Common myeloid progenitor, CD34-positive (primary cell): ENCODE measurements at regions of chr18 and their contacts with region 1.

Region 1: DNA sequence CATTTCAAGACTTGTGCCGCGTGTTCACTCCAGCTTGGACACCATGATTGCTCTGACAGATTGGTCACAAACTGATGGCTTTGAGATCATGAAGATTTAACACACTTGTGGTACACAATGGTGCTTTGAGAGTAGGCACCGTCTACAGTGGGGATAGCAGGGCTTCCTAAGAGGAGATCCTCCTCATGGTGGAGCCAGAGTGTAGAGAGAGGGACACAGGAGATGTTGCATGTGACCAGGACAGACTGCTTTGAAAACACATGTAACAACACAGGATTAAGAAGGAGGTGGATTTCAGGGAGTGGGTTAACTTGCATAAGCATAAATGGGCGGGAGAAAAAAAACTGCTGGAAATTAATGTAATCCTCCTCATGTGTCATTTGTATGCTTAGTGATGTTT is 95.7 kb upstream of the LINC00305 start:
- DNase-seq: peak; percentile 50 to 73 (median 70)
- H3K4me3 ChIP-seq: no peak overlapping the region
- H3K27ac ChIP-seq: no peak overlapping the region
- H3K4me1 ChIP-seq: no peaks in the 10 kb centered on the region
- H3K27me3 ChIP-seq: no peaks in the 10 kb centered on the region

Region 2: GRCh38 chr18:63951302-63951705 is 293.3 kb before region 1 on chr18:
- CTCF ChIA-PET with region 1: no interaction called
- POLR2A ChIA-PET with region 1: no interaction called
- DNase-seq: peak in 1 of 3 donors; percentile 27
- H3K4me3 ChIP-seq: no peak overlapping the region
- H3K27ac ChIP-seq: no peak overlapping the region
- H3K4me1 ChIP-seq: peaks cover 0 to 5% (median 2%) of the 10 kb centered on the region in 4 experiments
- H3K27me3 ChIP-seq: peaks cover 0 to 10% (median 0%) of the 10 kb centered on the region in 5 experiments

Region 3: GRCh38 chr18:64219517-64219916 is 25.1 kb before region 1 on chr18:
- CTCF ChIA-PET with region 1: no interaction called
- POLR2A ChIA-PET with region 1: no interaction called
- DNase-seq: no peak
- H3K4me3 ChIP-seq: no peak overlapping the region
- H3K27ac ChIP-seq: no peak overlapping the region
- H3K4me1 ChIP-seq: no peaks in the 10 kb centered on the region
- H3K27me3 ChIP-seq: no peaks in the 10 kb centered on the region

Region 4: DNA sequence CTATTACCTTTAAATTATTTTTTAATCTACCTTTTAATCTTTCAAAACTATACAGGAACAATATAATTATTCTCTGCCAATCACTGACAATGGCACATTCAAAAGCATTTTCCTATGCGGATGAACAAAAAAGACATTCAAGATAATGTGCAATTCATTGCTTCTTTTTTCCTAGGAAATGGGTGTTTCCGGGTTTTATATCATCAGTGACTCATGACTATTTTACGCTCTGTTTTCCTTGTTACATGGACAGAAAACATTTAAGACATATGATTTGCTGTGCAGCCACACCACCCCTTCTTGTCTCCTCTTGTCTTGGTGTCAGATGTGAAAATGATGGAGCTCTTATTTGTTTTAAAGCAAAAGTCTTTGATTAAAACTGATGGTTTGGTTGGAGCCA is 89.0 kb after region 1 on chr18:
- CTCF ChIA-PET with region 1: interaction called, 11 read pairs
- POLR2A ChIA-PET with region 1: no interaction called
- DNase-seq: no peak
- H3K4me3 ChIP-seq: no peak overlapping the region
- H3K27ac ChIP-seq: no peak overlapping the region
- H3K4me1 ChIP-seq: peaks cover 0 to 23% (median 7%) of the 10 kb centered on the region in 4 experiments
- H3K27me3 ChIP-seq: no peaks in the 10 kb centered on the region

Region 5: DNA sequence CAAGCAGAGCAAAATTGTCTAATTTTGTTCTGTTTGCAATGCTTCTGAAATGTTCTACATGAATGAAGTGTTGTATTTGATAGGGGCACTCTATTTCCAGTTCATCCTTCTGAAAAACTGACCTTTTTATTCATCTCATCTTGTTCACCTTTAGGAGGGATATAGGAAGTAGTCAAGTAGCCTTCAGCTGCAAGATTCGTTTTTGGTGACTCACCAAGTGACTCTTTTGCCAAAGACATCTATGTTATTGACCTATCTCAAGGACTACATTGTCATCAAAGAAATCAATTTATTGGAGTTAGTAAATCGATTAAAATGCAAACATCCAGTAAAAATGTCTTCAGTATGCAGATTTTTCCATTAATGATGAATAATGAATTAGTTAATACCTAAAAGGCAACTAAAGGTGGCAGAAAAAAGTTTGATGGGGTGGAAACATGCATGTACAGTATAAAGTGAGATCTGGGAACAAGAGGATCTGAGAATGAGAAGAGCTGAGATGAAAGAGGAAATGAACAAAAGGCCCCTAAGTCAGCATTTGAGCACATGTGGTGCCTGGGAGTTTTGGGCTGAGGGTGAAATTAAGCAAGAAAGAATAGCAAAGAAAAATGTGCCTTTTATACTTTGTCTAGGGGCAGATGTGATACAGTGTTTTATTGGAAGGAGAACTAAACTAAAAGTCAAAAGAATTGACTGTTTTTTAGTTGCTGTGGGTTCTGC is 159.4 kb after region 1 on chr18:
- CTCF ChIA-PET with region 1: interaction called, 45 read pairs
- POLR2A ChIA-PET with region 1: no interaction called
- DNase-seq: no peak
- H3K4me3 ChIP-seq: no peak overlapping the region
- H3K27ac ChIP-seq: no peak overlapping the region
- H3K4me1 ChIP-seq: no peaks in the 10 kb centered on the region
- H3K27me3 ChIP-seq: no peaks in the 10 kb centered on the region

Region 6: GRCh38 chr18:64409511-64409910 is 164.9 kb after region 1 on chr18:
- CTCF ChIA-PET with region 1: interaction called, 45 read pairs
- POLR2A ChIA-PET with region 1: interaction called, 3 read pairs
- DNase-seq: peak; percentile 52 to 72 (median 66)
- H3K4me3 ChIP-seq: no peak overlapping the region
- H3K27ac ChIP-seq: no peak overlapping the region
- H3K4me1 ChIP-seq: no peaks in the 10 kb centered on the region
- H3K27me3 ChIP-seq: no peaks in the 10 kb centered on the region